Activated CD4-positive, alpha-beta T cell treated with anti-CD3 and anti-CD28 coated beads for 36 hours (primary cell): ENCODE measurements at regions of chr15 and their contacts with region 1.

Region 1: DNA sequence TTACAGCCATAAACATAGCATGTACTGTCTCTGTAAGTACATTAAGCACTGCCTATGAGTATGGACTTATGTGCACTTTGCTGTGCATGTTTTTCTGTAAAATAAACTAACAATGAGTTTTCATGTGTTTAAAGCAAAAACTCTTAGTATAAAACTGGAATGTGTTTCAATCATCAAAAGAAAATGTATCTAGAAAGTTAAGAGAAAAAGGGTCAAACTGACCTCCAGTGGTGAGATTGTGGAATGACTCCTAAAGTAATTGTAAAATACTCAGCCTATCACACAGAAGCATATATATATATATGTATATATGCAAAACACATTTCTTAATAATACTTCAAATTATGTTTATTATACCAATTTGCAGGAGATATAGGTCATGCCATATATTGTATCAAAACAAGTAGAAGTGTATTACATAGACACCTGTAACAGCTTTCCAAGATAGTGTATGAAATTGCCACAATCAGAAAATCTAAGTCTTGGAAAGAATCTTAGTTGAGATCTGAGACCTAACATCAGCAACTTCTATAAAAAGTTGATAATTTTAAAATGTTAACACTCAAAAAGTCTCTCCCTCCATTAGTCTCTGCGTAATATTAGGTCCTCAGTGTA is 199.6 kb downstream of the FMN1 start:
- DNase-seq: no peak
- ATAC-seq: no peak
- H3K4me3 Mint-ChIP-seq: no peak overlapping the region
- H3K27ac Mint-ChIP-seq: no peak overlapping the region
- H3K4me1 Mint-ChIP-seq: no peaks in the 10 kb centered on the region
- H3K27me3 Mint-ChIP-seq: peaks cover 3% of the 10 kb centered on the region

Region 2: DNA sequence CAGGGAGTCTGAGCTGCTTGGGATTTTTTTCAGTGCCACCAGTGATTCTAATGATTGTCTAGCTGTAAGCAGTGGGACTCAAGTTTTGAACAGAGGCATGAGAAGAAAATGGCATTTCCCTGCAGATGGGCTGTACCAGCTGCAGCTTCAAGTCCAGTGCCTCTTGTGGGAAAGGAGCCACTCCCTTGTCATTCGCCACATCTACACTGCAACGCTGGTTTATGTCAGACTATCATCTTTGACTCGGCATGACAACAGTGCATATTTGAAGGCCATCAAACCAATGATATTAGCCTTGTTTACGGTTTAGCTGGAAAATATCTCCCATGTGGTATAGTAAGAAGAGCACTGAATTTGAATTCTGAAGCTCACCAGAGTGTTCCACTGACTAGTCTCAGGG is 331.2 kb before region 1 on chr15:
- CTCF ChIA-PET with region 1: interaction called, 20 read pairs
- POLR2A ChIA-PET with region 1: no interaction called
- intact Hi-C with region 1: loop called (anchors 1 to 2 kb)
- DNase-seq: no peak
- ATAC-seq: no peak
- H3K4me3 Mint-ChIP-seq: no peak overlapping the region
- H3K27ac Mint-ChIP-seq: no peak overlapping the region
- H3K4me1 Mint-ChIP-seq: peaks cover 4% of the 10 kb centered on the region
- H3K27me3 Mint-ChIP-seq: no peaks in the 10 kb centered on the region

Region 3: DNA sequence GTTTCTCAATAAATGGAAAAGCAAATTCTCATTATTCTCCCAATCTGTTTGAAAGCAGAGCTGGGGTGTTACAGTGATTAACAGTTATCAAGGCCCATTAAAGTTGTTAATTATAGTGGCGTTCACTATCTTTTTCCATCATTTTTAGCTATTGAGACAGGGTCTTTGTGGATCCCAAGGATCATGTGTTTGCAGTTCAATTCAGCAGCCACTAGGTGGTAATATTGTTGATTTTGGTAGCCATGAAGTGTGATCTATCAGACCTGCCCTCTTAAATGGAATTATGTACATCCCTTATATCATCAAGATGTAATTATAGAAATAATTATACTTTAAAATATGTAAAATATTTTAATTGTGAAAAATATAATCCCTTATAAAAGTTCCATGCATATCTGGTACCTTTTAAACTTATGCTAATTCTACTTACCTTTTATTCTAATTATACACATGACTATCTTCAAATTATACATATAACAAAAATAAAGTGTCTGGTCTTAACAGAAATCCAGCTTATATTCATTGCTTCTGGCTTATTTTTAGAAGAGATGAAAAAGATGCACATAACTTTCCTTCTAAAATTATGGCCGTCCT is 150.7 kb before region 1 on chr15:
- CTCF ChIA-PET with region 1: interaction called, 3 read pairs
- POLR2A ChIA-PET with region 1: no interaction called
- intact Hi-C with region 1: loop called (anchors 5 to 10 kb)
- DNase-seq: no peak
- ATAC-seq: no peak
- H3K4me3 Mint-ChIP-seq: no peak overlapping the region
- H3K27ac Mint-ChIP-seq: no peak overlapping the region
- H3K4me1 Mint-ChIP-seq: no peaks in the 10 kb centered on the region
- H3K27me3 Mint-ChIP-seq: peaks cover 4% of the 10 kb centered on the region

Region 4: DNA sequence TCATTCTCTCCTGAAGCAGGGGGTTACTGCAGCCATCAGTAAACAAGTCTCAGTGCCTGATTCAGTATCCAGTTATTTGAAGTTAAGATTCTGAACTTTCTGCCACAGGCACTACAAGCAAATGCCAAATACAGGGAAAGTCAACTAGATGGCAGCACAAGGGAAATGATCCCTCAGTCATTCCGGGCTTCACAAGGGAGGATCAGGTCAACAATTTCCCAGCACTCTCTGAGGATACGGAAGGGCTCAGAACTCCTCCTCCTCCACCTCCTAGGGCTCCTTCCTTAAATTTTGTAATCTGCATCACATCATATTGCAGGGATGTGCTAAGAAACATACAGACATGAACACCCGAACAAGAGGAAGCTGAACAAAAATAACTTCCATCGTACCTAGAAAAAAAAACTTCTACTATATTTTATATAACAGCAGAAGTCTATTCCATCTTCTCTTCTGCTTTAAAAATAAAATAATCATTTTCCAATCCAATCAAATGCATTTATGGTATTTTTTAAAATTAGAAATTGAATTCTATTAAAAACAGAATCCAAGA is 12.5 kb after region 1 on chr15:
- CTCF ChIA-PET with region 1: no interaction called
- POLR2A ChIA-PET with region 1: no interaction called
- intact Hi-C with region 1: no loop called
- DNase-seq: no peak
- ATAC-seq: no peak
- H3K4me3 Mint-ChIP-seq: no peak overlapping the region
- H3K27ac Mint-ChIP-seq: no peak overlapping the region
- H3K4me1 Mint-ChIP-seq: peaks cover 7% of the 10 kb centered on the region
- H3K27me3 Mint-ChIP-seq: peaks cover 12% of the 10 kb centered on the region